Activated T-helper 1 cell treated with anti-CD3 and anti-CD28 coated beads, Interleukin-12 subunit alpha, Interleukin-12 subunit beta, Interleukin-2, Interleukin-4 antibody, amounts not matched to agents 30 ng/mL and 10 ng/mL and 1 ng/mL, durations not matched to agents 14 hours and 24 hours and 36 hours (primary cell): ENCODE measurements at regions of chr19 and their contacts with region 1.

Region 1: GRCh38 chr19:56333505-56333904 is 18.9 kb upstream of the ZSCAN5A start:
- DNase-seq: peak; percentile 28
- H3K4me3 Mint-ChIP-seq: no peak overlapping the region
- H3K27ac Mint-ChIP-seq: no peak overlapping the region
- H3K4me1 Mint-ChIP-seq: no peaks in the 10 kb centered on the region
- H3K27me3 Mint-ChIP-seq: peaks cover 3% of the 10 kb centered on the region

Region 2: GRCh38 chr19:56105090-56105701 is 228.3 kb before region 1 on chr19:
- intact Hi-C with region 1: loop called (anchors 1 kb)
- DNase-seq: peak; percentile 28
- H3K4me3 Mint-ChIP-seq: no peak overlapping the region
- H3K27ac Mint-ChIP-seq: no peak overlapping the region
- H3K4me1 Mint-ChIP-seq: peaks cover 6% of the 10 kb centered on the region
- H3K27me3 Mint-ChIP-seq: no peaks in the 10 kb centered on the region